CD4-positive, alpha-beta T cell (primary cell): ENCODE measurements at regions of chr14 and their contacts with region 1.

Region 1: DNA sequence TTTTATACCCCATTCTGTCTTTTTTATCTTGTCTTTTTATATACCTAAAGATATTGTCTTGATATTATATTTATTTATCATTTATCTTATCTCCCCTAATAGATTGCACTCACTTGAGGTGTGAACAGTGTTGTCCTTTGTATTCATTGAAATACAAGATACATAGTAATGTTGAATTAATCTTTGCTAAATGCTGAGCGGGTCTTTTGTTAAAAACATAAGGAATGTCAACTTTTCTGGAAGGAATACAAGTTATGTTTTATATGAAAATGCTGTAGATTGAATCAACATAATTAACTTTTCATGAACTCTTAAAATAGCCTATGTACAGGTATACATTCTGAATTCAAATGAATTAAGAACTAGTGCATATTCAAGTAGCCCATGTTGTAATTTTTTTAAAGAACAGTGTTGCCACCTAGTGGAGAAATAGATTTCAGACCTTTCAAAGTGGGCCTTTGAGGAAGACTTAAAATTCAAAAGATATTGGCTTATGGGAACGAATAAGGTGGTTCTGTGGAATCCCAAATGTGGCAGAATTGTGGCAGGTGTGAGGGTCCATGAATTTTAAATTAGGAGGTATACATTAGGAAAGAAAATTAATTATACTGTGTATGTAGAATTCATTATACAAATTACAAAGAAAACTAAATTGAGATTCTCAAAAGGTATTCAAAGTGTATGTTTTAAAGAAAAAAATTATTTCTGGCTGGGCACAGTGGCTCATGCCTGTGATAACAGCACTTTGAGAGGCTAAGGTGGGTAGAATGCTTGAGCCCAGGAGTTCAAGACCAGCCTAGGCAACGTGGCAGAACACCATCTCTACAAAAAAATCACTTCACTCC is 19.1 kb downstream of the BBOF1 start:
- DNase-seq: peak in 4 of 14 experiments; percentile 6 to 69 (median 66)
- ATAC-seq: peak; percentile 51
- H3K4me3 ChIP-seq: no peak overlapping the region
- H3K4me3 Mint-ChIP-seq: no peak overlapping the region
- H3K27ac ChIP-seq: no peak overlapping the region
- H3K27ac Mint-ChIP-seq: no peak overlapping the region
- H3K4me1 ChIP-seq: no peaks in the 10 kb centered on the region
- H3K4me1 Mint-ChIP-seq: no peaks in the 10 kb centered on the region
- H3K27me3 ChIP-seq: no peaks in the 10 kb centered on the region
- H3K27me3 Mint-ChIP-seq: no peaks in the 10 kb centered on the region
- CTCF ChIP-seq: peak; percentile 87

Region 2: DNA sequence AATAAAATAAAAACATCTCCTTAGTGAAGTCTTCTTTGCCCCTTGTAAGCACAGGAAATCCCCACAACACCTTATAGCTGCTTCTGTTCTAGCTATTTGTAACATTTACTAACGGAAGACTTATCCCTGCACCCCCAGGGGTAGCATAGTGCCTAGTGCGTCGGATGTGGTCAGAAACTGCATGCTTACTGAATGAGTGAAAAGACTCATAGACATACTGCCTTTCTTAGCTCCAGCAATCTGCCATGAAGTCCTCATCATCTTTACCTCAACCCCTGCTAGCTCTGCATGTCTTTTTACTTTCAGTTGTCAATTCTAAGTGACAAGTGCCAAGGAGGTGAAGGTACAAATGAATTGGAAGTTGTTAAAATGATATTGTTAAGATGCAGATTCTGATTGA is 534.6 kb before region 1 on chr14:
- CTCF ChIA-PET with region 1: no interaction called
- POLR2A ChIA-PET with region 1: no interaction called
- intact Hi-C with region 1: loop called in 1 of 2 experiments (anchors 5 kb)
- DNase-seq: peak in 1 of 14 experiments; percentile 42
- ATAC-seq: no peak
- H3K4me3 ChIP-seq: no peak overlapping the region
- H3K4me3 Mint-ChIP-seq: no peak overlapping the region
- H3K27ac ChIP-seq: no peak overlapping the region
- H3K27ac Mint-ChIP-seq: no peak overlapping the region
- H3K4me1 ChIP-seq: no peaks in the 10 kb centered on the region
- H3K4me1 Mint-ChIP-seq: no peaks in the 10 kb centered on the region
- H3K27me3 ChIP-seq: no peaks in the 10 kb centered on the region
- H3K27me3 Mint-ChIP-seq: no peaks in the 10 kb centered on the region
- CTCF ChIP-seq: no peak

Region 3: DNA sequence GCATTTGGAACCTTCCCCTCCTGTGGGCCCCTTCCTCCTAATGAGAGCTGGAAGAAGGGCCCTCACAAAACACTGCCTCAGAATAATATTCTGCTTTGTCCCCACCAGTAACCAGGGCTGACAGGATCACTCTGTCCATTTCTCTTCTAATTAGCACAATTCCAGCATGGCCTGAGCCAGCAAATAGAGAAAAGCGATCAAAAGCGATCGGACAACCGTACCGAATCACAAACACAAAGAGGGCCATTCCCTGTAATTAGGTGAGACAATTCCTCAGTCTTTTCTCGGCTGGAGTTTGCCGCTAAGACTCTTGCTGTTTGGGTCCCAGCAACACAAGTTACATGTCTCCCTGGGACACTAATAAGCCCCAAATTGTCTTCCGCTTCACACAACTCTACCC is 165.4 kb after region 1 on chr14:
- CTCF ChIA-PET with region 1: no interaction called
- POLR2A ChIA-PET with region 1: no interaction called
- intact Hi-C with region 1: no loop called
- DNase-seq: no peak
- ATAC-seq: no peak
- H3K4me3 ChIP-seq: no peak overlapping the region
- H3K4me3 Mint-ChIP-seq: no peak overlapping the region
- H3K27ac ChIP-seq: no peak overlapping the region
- H3K27ac Mint-ChIP-seq: no peak overlapping the region
- H3K4me1 ChIP-seq: no peaks in the 10 kb centered on the region
- H3K4me1 Mint-ChIP-seq: no peaks in the 10 kb centered on the region
- H3K27me3 ChIP-seq: no peaks in the 10 kb centered on the region
- H3K27me3 Mint-ChIP-seq: no peaks in the 10 kb centered on the region
- CTCF ChIP-seq: no peak